ENCODE measurements at regions of chr7 and their contacts with region 1.

Region 1: DNA sequence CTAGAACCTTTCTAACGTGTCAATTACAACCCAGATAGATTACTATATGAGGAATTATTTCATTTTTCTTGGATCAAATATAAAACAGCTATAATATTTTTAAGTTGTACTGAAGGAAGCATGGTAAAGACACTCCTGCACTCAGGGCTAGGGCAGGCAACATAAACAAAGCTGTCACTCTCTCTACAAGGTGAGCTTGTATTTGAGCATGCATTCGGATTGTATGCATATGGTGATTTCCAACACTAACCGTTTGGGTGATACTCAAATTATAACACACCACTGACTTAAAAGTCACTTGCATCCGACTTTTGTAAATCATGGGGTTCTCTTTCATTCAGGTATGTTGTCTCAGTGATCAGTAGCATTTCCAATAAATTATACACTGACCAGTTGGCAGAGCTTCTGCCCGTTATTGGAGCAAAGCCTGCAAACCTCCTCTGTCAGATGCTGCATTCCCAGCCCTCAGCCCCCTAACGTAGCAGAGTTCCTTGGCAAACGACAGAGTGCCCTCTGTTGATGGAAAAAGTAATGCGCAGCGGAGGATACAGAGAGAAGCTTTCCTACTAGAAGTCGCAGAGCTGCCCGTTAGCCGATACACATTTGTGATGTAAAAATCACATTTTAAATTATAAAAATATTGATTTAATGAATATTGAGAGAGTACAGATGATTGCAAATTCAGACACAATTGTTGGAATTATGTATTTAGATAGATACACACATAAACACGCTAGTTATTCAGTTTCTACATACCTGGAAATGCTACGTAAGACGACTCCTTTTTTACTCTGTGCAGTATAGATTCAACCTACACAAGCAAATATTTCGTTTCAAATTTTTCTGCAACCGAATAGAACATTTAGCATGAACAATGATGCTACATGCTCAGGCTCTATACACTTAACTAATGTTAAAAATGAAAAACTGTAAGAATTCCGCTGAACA is 173.9 kb upstream of the SP4 start:
- DNase-seq: peak; percentile 92

Region 2: GRCh38 chr7:20778063-20778721 is 475.8 kb before region 1 on chr7:
- in situ Hi-C with region 1: loop called (anchors 10 kb)
- DNase-seq: peak; percentile 73